HCT116 (cell line): ENCODE measurements at regions of chr9 and their contacts with region 1.

Region 1: GRCh38 chr9:113042884-113043657 is 13.5 kb downstream of the ZFP37 start:
- DNase-seq: no peak
- ATAC-seq: no peak
- H3K4me3 ChIP-seq: no peak overlapping the region
- H3K27ac ChIP-seq: no peak overlapping the region
- H3K4me1 ChIP-seq: no peaks in the 10 kb centered on the region
- H3K27me3 ChIP-seq: no peaks in the 10 kb centered on the region
- CTCF ChIP-seq: no peak
- POLR2A ChIP-seq: no peak
- RAD21 ChIP-seq: no peak

Region 2: GRCh38 chr9:112997236-112997941 is 45.7 kb before region 1 on chr9:
- CTCF ChIA-PET with region 1: no interaction called
- POLR2A ChIA-PET with region 1: no interaction called
- RAD21 ChIA-PET with region 1: no interaction called
- intact Hi-C with region 1: loop called (anchors 10 kb)
- DNase-seq: no peak
- ATAC-seq: no peak
- H3K4me3 ChIP-seq: no peak overlapping the region
- H3K27ac ChIP-seq: no peak overlapping the region
- H3K4me1 ChIP-seq: no peaks in the 10 kb centered on the region
- H3K27me3 ChIP-seq: no peaks in the 10 kb centered on the region
- CTCF ChIP-seq: no peak
- POLR2A ChIP-seq: no peak
- RAD21 ChIP-seq: no peak